Left lung (tissue), 14 donors: ENCODE measurements at regions of chr6 and their contacts with region 1.

Region 1: GRCh38 chr6:29834564-29835436 is 7.2 kb downstream of the HLA-G start:
- DNase-seq: peak in 2 of 4 donors; percentile 26 to 81
- ATAC-seq: peak; percentile 83
- H3K4me3 ChIP-seq: no peak overlapping the region
- H3K27ac ChIP-seq: no peak overlapping the region
- H3K4me1 ChIP-seq: no peaks in the 10 kb centered on the region
- H3K27me3 ChIP-seq: peaks cover 3 to 94% of the 10 kb centered on the region in 2 donors
- CTCF ChIP-seq: peak; percentile 87 to 93

Region 2: DNA sequence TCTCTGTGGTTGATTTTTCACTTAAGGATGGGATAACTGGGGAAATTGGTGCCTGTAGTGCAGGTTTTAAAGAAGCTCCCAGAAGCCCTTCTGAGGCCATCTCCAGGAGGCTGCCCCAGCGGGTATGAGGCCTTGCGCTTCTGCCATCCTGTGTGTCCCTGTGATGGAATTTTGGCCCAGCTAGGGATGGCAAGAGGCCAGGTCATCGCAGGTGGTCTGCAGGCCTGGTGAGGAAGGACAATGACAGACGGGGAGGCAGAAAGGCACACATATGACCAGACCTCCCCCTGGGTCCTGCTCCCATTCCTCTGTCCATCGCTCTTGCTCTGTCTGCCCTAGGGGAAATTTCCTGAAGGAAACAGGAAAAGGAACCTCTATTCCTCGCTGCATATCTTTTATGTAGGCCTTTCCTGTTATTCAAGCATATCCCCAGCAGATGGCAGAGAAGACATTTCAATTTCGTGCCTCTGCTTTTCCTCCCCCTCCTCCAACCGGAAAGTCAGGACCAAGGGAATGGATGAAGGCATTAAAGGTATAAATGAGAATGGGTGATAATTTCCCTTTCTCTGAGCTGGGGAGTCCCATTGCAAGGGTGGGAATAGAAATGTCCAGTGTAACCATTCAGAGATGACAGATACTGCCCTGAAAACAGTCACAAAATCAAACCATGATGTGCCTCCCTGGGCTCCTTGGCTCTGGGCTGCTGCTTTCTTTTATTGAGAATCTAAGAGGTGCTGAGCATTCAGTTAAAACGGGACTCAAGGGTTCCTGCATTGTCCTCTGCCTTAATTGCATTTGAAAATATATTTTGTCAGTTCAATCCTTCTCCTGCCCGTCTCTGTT is 129.2 kb before region 1 on chr6:
- intact Hi-C with region 1: loop called in 1 of 2 experiments (anchors 10 kb)
- DNase-seq: peak in 2 of 4 donors; percentile 20 to 60
- ATAC-seq: peak; percentile 88
- H3K4me3 ChIP-seq: no peak overlapping the region
- H3K27ac ChIP-seq: no peak overlapping the region
- H3K4me1 ChIP-seq: peaks cover 0 to 6% of the 10 kb centered on the region in 2 donors
- H3K27me3 ChIP-seq: peaks cover 0 to 61% of the 10 kb centered on the region in 2 donors
- CTCF ChIP-seq: peak; percentile 30 to 62

Region 3: DNA sequence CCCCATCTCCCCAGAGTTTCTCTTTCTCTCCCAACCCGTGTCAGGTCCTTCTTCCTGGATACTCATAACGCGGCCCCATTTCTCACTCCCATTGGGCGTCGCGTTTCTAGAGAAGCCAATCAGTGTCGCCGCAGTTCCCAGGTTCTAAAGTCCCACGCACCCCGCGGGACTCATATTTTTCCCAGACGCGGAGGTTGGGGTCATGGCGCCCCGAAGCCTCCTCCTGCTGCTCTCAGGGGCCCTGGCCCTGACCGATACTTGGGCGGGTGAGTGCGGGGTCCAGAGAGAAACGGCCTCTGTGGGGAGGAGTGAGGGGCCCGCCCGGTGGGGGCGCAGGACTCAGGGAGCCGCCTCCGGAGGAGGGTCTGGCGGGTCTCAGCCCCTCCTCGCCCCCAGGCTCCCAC is 111.5 kb before region 1 on chr6 and contains the start of gene HLA-F:
- intact Hi-C with region 1: no loop called
- DNase-seq: peak; percentile 60 to 90 (median 78)
- ATAC-seq: peak; percentile 98
- H3K4me3 ChIP-seq: peak within 1 kb of the TSS; percentile 91 to 100
- H3K27ac ChIP-seq: peak within 1 kb of the TSS; percentile 89 to 95
- H3K4me1 ChIP-seq: peaks cover 0 to 36% of the 10 kb centered on the region in 2 donors
- H3K27me3 ChIP-seq: no peaks in the 10 kb centered on the region
- CTCF ChIP-seq: no peak
- polyA plus RNA-seq, gene HLA-F: 15.4 to 23.9 (median 18.1) TPM

Region 4: DNA sequence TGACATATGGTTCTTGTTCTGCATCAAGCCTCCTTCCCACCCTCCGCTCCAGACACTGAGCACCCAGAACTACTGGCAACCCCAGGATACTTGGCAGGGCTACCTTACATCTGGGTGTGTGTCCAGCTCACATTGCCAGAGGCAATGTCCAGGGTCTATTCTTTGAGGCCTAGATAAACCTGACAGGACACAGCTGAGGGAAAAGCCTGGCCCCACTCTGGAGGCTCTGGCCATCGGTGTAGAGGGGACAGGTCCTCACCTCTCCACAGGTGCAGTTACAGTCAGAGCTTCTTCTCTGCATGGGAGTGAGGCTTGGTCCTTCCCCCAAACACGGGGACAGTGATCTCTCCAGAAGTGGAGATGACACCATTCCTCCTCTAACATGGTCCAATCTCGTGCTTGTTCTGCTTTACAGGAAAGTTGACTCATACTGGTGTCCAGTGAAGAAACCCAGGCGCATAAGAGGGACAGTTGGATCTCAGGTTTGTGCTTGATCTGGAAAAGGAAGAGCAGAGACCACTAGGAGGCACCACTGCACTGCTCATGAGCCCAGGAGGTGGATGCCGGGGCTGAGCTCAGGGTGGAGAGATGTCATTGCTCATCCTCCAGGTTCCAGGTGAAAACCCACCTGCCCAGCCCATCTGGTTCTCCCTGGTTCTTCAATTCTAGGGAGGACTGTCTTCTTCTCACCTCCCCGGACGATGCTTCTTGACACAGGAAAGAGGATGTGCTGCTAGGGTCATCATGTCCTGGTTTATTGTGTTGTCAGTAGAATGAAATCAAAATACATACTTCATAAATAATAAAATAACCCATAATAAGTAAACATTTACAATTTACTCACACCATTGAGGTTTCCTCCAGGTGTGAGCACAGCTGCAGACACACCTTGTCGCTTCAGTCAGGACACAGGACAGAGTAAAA is 96.8 kb before region 1 on chr6:
- intact Hi-C with region 1: loop called in 1 of 2 experiments (anchors 5 kb)
- DNase-seq: peak in 2 of 4 donors; percentile 57 to 68
- ATAC-seq: peak; percentile 98
- H3K4me3 ChIP-seq: no peak overlapping the region
- H3K27ac ChIP-seq: no peak overlapping the region
- H3K4me1 ChIP-seq: peaks cover 0 to 2% of the 10 kb centered on the region in 2 donors
- H3K27me3 ChIP-seq: no peaks in the 10 kb centered on the region
- CTCF ChIP-seq: peak; percentile 50 to 63

Region 5: GRCh38 chr6:29926413-29927274 is 91.8 kb after region 1 on chr6:
- intact Hi-C with region 1: no loop called
- DNase-seq: peak; percentile 49 to 95 (median 85)
- ATAC-seq: peak; percentile 89
- H3K4me3 ChIP-seq: peak overlapping the region; percentile 74 to 81
- H3K27ac ChIP-seq: peak overlapping the region; percentile 90 to 97
- H3K4me1 ChIP-seq: peaks cover 5 to 25% of the 10 kb centered on the region in 2 donors
- H3K27me3 ChIP-seq: no peaks in the 10 kb centered on the region
- CTCF ChIP-seq: no peak

Region 6: GRCh38 chr6:30076333-30076732 is 241.5 kb after region 1 on chr6:
- intact Hi-C with region 1: no loop called
- DNase-seq: no peak
- ATAC-seq: peak; percentile 5
- H3K4me3 ChIP-seq: no peak overlapping the region
- H3K27ac ChIP-seq: peak overlapping the region in 1 of 2 donors; percentile 38
- H3K4me1 ChIP-seq: peaks cover 0 to 15% of the 10 kb centered on the region in 2 donors
- H3K27me3 ChIP-seq: peaks cover 19 to 87% of the 10 kb centered on the region in 2 donors
- CTCF ChIP-seq: no peak